CD8-positive, alpha-beta T cell (primary cell): ENCODE measurements at regions of chr2 and their contacts with region 1.

Region 1: GRCh38 chr2:64698668-64699444 is 45.1 kb upstream of the SERTAD2 start:
- DNase-seq: peak in 2 of 9 experiments; percentile 15 to 53
- ATAC-seq: peak; percentile 78
- H3K4me3 ChIP-seq: no peak overlapping the region
- H3K4me3 Mint-ChIP-seq: no peak overlapping the region
- H3K27ac ChIP-seq: no peak overlapping the region
- H3K27ac Mint-ChIP-seq: no peak overlapping the region
- H3K4me1 ChIP-seq: peaks cover 8% of the 10 kb centered on the region
- H3K4me1 Mint-ChIP-seq: peaks cover 37% of the 10 kb centered on the region
- H3K27me3 ChIP-seq: no peaks in the 10 kb centered on the region
- H3K27me3 Mint-ChIP-seq: no peaks in the 10 kb centered on the region
- CTCF ChIP-seq: no peak

Region 2: DNA sequence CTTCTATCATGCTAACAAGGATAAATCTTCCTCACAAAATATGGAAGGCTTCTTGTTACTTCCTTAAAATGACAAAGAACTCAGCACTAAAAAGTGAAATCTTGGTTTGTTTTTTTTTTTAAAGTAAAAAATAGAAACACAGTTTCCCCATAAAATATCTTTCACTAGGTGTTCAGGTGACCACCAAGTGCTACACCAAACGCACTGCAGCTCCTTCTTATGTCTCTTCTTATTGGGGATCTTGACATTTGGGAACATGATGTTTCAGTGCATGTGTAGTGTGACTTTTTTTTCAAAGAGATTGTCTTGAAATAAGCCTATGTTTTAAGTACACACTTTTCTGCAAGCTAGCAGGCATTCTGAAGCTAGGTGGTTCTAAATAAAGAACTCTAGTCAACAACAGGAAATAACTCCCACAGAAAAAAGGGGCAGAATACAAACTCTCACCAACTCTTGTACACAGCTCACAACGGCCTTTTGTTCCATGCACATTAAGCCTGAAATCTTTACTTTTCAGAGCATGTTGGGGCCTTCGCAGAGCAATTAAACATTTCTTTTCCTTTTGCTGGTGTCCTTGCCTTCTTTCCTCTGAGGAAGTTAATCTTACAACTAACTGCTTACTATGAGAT is 31.9 kb before region 1 on chr2:
- CTCF ChIA-PET with region 1: interaction called, 3 read pairs
- POLR2A ChIA-PET with region 1: interaction called, 3 read pairs
- intact Hi-C with region 1: loop called in 1 of 2 experiments (anchors 5 kb)
- DNase-seq: peak in 1 of 9 experiments; percentile 38
- ATAC-seq: peak; percentile 70
- H3K4me3 ChIP-seq: no peak overlapping the region
- H3K4me3 Mint-ChIP-seq: peak overlapping the region; percentile 52
- H3K27ac ChIP-seq: peak overlapping the region in 1 of 2 experiments; percentile 73
- H3K27ac Mint-ChIP-seq: peak overlapping the region; percentile 89
- H3K4me1 ChIP-seq: peaks cover 49% of the 10 kb centered on the region
- H3K4me1 Mint-ChIP-seq: peaks cover 33% of the 10 kb centered on the region
- H3K27me3 ChIP-seq: no peaks in the 10 kb centered on the region
- H3K27me3 Mint-ChIP-seq: no peaks in the 10 kb centered on the region
- CTCF ChIP-seq: no peak

Region 3: GRCh38 chr2:64683771-64684695 is 14.8 kb before region 1 on chr2:
- CTCF ChIA-PET with region 1: interaction called, 3 read pairs
- POLR2A ChIA-PET with region 1: interaction called, 3 read pairs
- intact Hi-C with region 1: loop called in 1 of 2 experiments (anchors 2 kb)
- DNase-seq: no peak
- ATAC-seq: no peak
- H3K4me3 ChIP-seq: no peak overlapping the region
- H3K4me3 Mint-ChIP-seq: no peak overlapping the region
- H3K27ac ChIP-seq: no peak overlapping the region
- H3K27ac Mint-ChIP-seq: no peak overlapping the region
- H3K4me1 ChIP-seq: peaks cover 11% of the 10 kb centered on the region
- H3K4me1 Mint-ChIP-seq: peaks cover 38% of the 10 kb centered on the region
- H3K27me3 ChIP-seq: no peaks in the 10 kb centered on the region
- H3K27me3 Mint-ChIP-seq: no peaks in the 10 kb centered on the region
- CTCF ChIP-seq: no peak

Region 4: GRCh38 chr2:64787702-64788101 is 88.8 kb after region 1 on chr2:
- CTCF ChIA-PET with region 1: no interaction called
- POLR2A ChIA-PET with region 1: no interaction called
- intact Hi-C with region 1: no loop called
- DNase-seq: no peak
- ATAC-seq: no peak
- H3K4me3 ChIP-seq: no peak overlapping the region
- H3K4me3 Mint-ChIP-seq: no peak overlapping the region
- H3K27ac ChIP-seq: no peak overlapping the region
- H3K27ac Mint-ChIP-seq: no peak overlapping the region
- H3K4me1 ChIP-seq: no peaks in the 10 kb centered on the region
- H3K4me1 Mint-ChIP-seq: no peaks in the 10 kb centered on the region
- H3K27me3 ChIP-seq: no peaks in the 10 kb centered on the region
- H3K27me3 Mint-ChIP-seq: no peaks in the 10 kb centered on the region
- CTCF ChIP-seq: no peak